ENCODE measurements at regions of chr6 and their contacts with region 1.

Region 1: GRCh38 chr6:110981202-110981600 is 637 bp upstream of the RPF2 start:
- DNase-seq: no peak
- ATAC-seq: no peak
- H3K4me3 ChIP-seq: peak overlapping the region; percentile 90 to 96 (median 93)
- H3K27ac ChIP-seq: peak overlapping the region; percentile 79 to 94 (median 89)
- H3K4me1 ChIP-seq: peaks cover 0 to 9% of the 10 kb centered on the region in 2 donors
- H3K27me3 ChIP-seq: no peaks in the 10 kb centered on the region
- CTCF ChIP-seq: no peak
- POLR2A ChIP-seq: no peak

Region 2: DNA sequence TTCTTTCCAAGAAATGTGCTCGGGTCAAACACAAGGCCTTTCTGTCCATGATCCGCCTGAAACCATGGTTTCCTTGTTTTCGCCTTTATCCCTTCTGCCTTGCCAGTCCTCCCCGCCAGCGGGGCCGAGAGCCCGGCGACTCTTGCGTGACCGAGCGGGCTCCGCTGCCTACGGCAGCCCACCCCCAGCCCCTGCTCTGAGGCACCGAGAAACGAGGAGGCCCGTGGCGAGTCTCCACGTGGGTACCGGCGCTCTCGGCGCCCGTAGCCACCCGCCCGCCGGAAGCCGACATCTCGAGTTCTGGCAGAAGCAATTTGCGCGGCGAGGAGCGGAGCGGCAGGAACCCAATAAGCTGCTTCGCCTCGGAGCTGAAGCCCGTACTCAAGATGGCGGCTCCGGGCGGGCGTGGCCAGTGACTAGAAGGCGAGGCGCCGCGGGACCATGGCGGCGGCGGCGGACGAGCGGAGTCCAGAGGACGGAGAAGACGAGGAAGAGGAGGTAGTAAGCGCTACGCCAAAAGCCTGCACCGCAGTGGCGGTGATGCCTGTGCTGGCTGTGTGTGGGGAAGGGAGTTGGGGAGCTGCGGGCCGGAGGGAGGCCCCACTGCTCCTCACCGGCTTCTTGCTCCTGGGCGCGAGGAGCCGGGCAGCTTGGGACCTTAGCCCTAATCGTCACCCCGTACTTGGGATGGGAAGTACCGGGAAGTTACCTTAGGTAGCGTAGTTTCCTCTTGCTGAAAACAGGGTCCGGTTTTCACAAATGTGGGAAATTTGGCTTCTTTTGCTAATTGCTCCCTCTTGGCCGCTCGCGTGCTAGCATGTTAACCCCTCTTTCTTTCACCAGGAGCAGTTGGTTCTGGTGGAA is 22.6 kb before region 1 on chr6 and contains the start of gene GTF3C6:
- in situ Hi-C with region 1: no loop called
- intact Hi-C with region 1: loop called (anchors 1 kb)
- DNase-seq: peak; percentile 88 to 89
- ATAC-seq: peak; percentile 97 to 99
- H3K4me3 ChIP-seq: peak within 1 kb of the TSS; percentile 81 to 98 (median 92)
- H3K27ac ChIP-seq: peak within 1 kb of the TSS; percentile 89 to 91 (median 90)
- H3K4me1 ChIP-seq: peaks cover 11 to 12% of the 10 kb centered on the region in 2 donors
- H3K27me3 ChIP-seq: no peaks in the 10 kb centered on the region
- CTCF ChIP-seq: no peak
- POLR2A ChIP-seq: peak; percentile 35 to 41
- total RNA-seq, gene GTF3C6: 76.7 to 105 (median 82.4) TPM